Activated CD4-positive, alpha-beta T cell treated with anti-CD3 and anti-CD28 coated beads for 36 hours (primary cell): ENCODE measurements at regions of chr13 and their contacts with region 1.

Region 1: GRCh38 chr13:74230984-74231501 is 96.8 kb upstream of the KLF12 start:
- DNase-seq: no peak
- ATAC-seq: peak; percentile 97
- H3K4me3 Mint-ChIP-seq: peak overlapping the region; percentile 57
- H3K27ac Mint-ChIP-seq: peak overlapping the region; percentile 92
- H3K4me1 Mint-ChIP-seq: peaks cover 35% of the 10 kb centered on the region
- H3K27me3 Mint-ChIP-seq: no peaks in the 10 kb centered on the region

Region 2: GRCh38 chr13:73924607-73925006 is 306.4 kb before region 1 on chr13:
- CTCF ChIA-PET with region 1: no interaction called
- POLR2A ChIA-PET with region 1: no interaction called
- intact Hi-C with region 1: loop called in 1 of 2 experiments (anchors 5 kb)
- DNase-seq: no peak
- ATAC-seq: peak; percentile 72
- H3K4me3 Mint-ChIP-seq: no peak overlapping the region
- H3K27ac Mint-ChIP-seq: peak overlapping the region; percentile 86
- H3K4me1 Mint-ChIP-seq: peaks cover 76% of the 10 kb centered on the region
- H3K27me3 Mint-ChIP-seq: no peaks in the 10 kb centered on the region

Region 3: DNA sequence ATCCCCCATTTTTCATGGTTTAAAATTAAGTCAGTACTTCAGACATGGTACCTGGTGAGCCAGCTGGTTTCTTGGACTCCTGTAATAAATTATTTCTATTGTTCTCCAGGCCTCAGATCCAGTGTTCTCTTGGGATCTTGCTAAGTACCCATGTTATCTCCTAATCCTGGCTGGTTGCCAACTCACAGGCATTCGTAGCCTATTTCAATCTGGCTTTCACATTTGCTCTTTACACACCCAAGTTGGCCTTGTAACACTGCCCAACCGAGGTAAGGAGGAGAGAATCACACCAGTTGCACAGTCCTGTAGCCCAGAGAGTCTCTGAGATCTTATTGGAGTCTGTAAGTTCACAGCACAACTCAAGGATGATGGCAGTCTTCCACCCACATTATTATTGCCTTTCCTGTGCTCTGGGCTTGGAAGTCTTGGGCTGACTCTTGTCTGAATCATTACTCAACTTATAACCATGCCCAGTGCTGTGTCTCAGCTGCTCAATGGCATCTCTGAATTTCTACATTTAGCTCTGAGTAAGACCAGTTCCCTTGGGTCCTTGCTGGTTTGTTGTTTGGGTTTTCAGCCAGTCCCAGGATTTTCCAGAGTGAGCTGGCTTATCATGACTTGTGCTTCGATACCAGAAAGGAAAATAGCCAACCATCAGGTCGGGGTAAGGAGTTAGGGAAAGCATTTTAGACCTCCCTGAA is 20.2 kb before region 1 on chr13:
- CTCF ChIA-PET with region 1: no interaction called
- POLR2A ChIA-PET with region 1: no interaction called
- intact Hi-C with region 1: no loop called
- DNase-seq: no peak
- ATAC-seq: peak; percentile 53
- H3K4me3 Mint-ChIP-seq: no peak overlapping the region
- H3K27ac Mint-ChIP-seq: no peak overlapping the region
- H3K4me1 Mint-ChIP-seq: no peaks in the 10 kb centered on the region
- H3K27me3 Mint-ChIP-seq: no peaks in the 10 kb centered on the region

Region 4: GRCh38 chr13:74243637-74244526 is 12.8 kb after region 1 on chr13:
- CTCF ChIA-PET with region 1: interaction called, 3 read pairs
- POLR2A ChIA-PET with region 1: no interaction called
- intact Hi-C with region 1: loop called (anchors 1 kb)
- DNase-seq: peak; percentile 20
- ATAC-seq: peak; percentile 81
- H3K4me3 Mint-ChIP-seq: peak overlapping the region; percentile 27
- H3K27ac Mint-ChIP-seq: peak overlapping the region; percentile 76
- H3K4me1 Mint-ChIP-seq: peaks cover 71% of the 10 kb centered on the region
- H3K27me3 Mint-ChIP-seq: no peaks in the 10 kb centered on the region

Region 5: GRCh38 chr13:74443631-74444030 is 212.6 kb after region 1 on chr13:
- CTCF ChIA-PET with region 1: no interaction called
- POLR2A ChIA-PET with region 1: no interaction called
- intact Hi-C with region 1: no loop called
- DNase-seq: no peak
- ATAC-seq: no peak
- H3K4me3 Mint-ChIP-seq: no peak overlapping the region
- H3K27ac Mint-ChIP-seq: no peak overlapping the region
- H3K4me1 Mint-ChIP-seq: no peaks in the 10 kb centered on the region
- H3K27me3 Mint-ChIP-seq: no peaks in the 10 kb centered on the region